ENCODE measurements at regions of chr7 and their contacts with region 1.

Region 1: DNA sequence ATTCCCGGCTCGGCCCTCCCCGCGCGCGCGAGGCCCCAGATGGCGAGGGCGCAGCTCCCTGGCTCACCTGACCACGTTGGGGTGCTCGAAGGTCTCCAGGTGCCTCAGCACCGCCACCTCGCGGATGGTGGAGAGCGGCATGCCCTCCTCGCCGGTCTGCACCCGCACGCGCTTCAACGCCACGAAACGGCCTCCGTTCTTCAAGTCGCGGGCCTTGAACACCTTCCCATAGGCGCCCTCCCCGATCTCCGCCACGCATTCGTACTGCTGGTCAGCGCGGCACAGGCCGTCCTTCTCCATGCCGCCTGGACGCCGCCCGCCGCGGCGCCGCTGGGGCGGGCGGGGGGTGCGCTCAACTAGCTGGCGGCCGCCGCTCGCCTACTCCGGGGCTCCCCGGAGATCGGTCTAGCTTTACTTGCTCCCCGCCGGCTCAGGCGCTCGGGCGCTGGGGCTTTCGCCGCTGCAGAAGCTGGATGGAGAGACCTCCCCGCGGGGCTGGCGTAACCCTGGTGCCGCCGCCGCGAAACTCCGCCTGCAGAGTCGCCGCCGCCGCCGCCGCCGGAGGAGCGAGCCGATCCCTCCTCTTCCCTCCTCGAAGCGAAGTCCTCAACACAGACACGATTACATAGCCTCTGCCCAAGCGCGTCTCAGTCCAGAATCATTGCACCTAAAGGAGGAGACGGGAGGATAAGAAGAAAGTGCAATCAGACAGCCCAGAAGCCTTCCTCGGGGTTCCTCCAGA is 3.2 kb downstream of the CDK6 start:
- DNase-seq: peak; percentile 97
- H3K4me3 Mint-ChIP-seq: peak overlapping the region; percentile 99
- H3K27ac Mint-ChIP-seq: peak overlapping the region; percentile 100
- H3K4me1 Mint-ChIP-seq: peaks cover 40% of the 10 kb centered on the region
- H3K27me3 Mint-ChIP-seq: peaks cover 6% of the 10 kb centered on the region

Region 2: GRCh38 chr7:92528188-92528957 is 304.8 kb before region 1 on chr7 and contains the starts of genes PEX1 and RBM48:
- intact Hi-C with region 1: loop called (anchors 1 kb)
- DNase-seq: peak; percentile 98
- H3K4me3 Mint-ChIP-seq: peak within 1 kb of the TSS; percentile 98
- H3K27ac Mint-ChIP-seq: peak within 1 kb of the TSS; percentile 98
- H3K4me1 Mint-ChIP-seq: peaks cover 22% of the 10 kb centered on the region
- H3K27me3 Mint-ChIP-seq: peaks cover 2% of the 10 kb centered on the region
- total RNA-seq, gene PEX1: 14.4 and 14.8 TPM in 2 replicates
- total RNA-seq, gene RBM48: 14.4 and 17.3 TPM in 2 replicates

Region 3: DNA sequence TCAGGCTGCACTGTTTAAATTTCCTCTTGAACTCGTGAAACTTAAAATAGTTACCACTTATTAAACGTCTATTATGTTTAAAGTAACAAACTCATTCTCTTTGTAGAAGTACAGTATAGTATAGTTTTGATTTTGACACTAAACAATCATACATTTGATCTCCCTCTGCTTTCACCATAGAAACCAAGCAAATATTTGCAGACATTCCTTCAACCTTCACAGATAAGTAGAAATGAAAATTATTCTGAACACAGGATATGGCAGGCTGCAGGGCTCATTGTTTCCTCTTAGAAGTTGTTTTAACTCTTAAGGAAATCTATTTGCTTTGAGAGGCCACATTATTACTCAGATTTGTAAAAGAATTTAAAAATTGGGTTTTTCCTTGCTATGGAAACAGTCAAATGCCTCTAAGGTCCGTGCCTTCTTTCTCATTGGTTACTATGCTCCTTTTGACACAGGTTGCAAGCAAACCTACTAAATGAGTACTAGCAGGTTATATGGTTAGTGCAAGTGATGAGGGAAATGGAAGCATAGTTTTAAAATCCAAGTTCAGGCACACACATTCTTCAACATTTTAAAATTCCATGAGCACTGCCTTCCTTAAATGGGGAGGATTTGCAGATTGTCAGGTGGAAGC is 150.2 kb before region 1 on chr7:
- intact Hi-C with region 1: loop called (anchors 1 kb)
- DNase-seq: peak; percentile 75
- H3K4me3 Mint-ChIP-seq: peak overlapping the region; percentile 47
- H3K27ac Mint-ChIP-seq: peak overlapping the region; percentile 96
- H3K4me1 Mint-ChIP-seq: peaks cover 79% of the 10 kb centered on the region
- H3K27me3 Mint-ChIP-seq: no peaks in the 10 kb centered on the region

Region 4: DNA sequence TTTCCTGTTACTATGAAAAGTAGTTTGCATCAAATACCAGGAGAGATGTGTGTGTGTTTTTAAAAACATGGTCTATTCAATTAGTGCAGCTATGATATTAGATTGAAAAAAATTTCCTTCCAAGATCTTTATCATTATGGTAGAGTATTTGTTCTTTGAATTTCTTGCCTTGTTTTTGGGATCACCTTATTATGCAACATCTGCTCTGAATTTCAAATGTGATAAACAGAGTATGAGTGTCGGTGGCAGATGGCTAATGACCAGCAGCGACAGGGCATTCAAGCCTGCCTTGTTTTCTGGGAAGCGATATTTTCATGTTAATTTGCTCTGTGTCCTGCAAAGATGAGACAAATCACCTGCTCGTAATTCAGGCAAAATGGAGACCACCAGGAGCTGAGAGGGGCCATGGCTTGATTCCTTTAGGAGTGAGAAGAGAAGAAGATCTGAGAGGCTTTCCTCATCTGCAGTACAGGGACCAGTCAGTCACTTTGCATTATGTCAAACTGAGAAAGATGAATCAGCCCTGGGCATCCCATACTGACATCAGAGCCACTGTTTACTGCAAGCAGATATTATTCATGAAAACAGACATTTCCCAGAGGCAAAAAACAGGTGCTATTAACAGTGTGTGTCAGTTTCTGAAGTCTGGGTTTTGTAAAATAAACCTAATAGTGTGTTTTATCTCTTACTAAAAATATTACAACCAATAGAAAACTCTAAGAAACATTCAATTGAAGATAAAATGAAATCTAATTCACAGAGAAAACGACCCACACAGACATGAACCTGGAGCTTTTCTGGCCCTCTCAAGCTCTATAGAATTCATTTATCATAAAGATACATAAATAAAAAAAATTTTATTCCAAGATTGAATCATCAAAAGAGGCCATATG is 64.4 kb before region 1 on chr7:
- intact Hi-C with region 1: loop called (anchors 2 kb)
- DNase-seq: peak; percentile 66
- H3K4me3 Mint-ChIP-seq: peak overlapping the region; percentile 63
- H3K27ac Mint-ChIP-seq: peak overlapping the region; percentile 94
- H3K4me1 Mint-ChIP-seq: peaks cover 59% of the 10 kb centered on the region
- H3K27me3 Mint-ChIP-seq: no peaks in the 10 kb centered on the region

Region 5: GRCh38 chr7:92854501-92855238 is 21.5 kb after region 1 on chr7:
- intact Hi-C with region 1: loop called (anchors 2 kb)
- DNase-seq: peak; percentile 68
- H3K4me3 Mint-ChIP-seq: peak overlapping the region; percentile 51
- H3K27ac Mint-ChIP-seq: peak overlapping the region; percentile 85
- H3K4me1 Mint-ChIP-seq: peaks cover 16% of the 10 kb centered on the region
- H3K27me3 Mint-ChIP-seq: no peaks in the 10 kb centered on the region

Region 6: DNA sequence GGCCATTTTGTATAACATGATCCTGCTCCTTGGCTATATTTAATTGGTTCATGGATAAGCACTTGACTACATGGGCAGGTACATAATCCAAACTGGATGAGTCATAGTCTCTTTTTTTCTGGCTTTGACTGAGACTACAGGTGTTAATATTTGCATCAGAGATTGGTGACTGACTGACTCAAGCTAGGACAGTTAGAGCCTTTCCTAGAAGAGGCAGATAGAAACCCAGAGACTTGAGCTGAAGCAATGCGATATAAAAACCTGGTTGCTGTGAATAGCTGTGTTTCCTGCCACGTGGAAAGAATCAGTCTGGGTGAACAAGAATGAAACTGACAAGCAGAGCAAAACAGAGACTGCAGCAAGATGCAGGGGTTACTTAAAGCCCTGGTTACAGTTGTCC is 203.6 kb after region 1 on chr7:
- intact Hi-C with region 1: loop called (anchors 1 kb)
- DNase-seq: peak; percentile 83
- H3K4me3 Mint-ChIP-seq: no peak overlapping the region
- H3K27ac Mint-ChIP-seq: peak overlapping the region; percentile 74
- H3K4me1 Mint-ChIP-seq: peaks cover 26% of the 10 kb centered on the region
- H3K27me3 Mint-ChIP-seq: no peaks in the 10 kb centered on the region

Region 7: DNA sequence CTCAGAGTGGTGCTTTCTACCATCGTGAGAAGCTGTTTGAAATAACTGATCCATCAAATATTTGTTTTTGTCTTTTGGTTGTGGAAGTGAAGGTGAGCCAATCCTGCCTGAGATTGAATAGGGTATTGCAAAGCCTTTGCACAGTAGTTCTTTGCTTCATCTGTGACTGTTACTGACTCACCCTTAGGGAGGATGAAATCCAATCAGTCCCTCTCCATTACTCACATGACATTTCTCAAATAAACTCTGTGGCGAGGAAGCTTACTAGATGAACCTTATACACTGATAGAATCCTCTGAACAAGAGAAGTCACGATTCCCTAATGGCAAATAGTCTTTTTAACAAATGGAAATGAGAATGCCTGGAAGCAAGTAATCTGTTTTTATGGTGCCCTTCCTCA is 361.2 kb after region 1 on chr7:
- intact Hi-C with region 1: no loop called
- DNase-seq: no peak
- H3K4me3 Mint-ChIP-seq: no peak overlapping the region
- H3K27ac Mint-ChIP-seq: no peak overlapping the region
- H3K4me1 Mint-ChIP-seq: no peaks in the 10 kb centered on the region
- H3K27me3 Mint-ChIP-seq: peaks cover 40% of the 10 kb centered on the region

Region 8: DNA sequence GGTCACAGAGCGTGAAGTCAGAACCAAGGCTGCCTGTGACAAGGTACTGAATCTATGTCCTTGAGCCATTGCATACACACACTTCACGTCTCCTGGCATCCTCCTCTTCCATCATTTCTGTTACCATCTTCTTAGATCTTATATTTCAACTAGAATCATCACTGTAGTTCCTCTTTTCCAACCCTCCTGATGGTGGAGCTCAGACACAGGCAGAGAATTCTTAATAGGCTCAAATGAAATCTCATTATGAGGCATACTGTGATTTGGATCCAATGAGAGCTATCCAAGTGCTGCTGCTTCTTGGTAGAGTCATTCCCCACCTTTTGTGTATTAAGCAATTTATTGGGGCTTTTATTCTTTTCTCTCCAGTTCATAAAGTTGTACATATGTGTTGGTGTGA is 628.2 kb after region 1 on chr7:
- intact Hi-C with region 1: no loop called
- DNase-seq: no peak
- H3K4me3 Mint-ChIP-seq: no peak overlapping the region
- H3K27ac Mint-ChIP-seq: no peak overlapping the region
- H3K4me1 Mint-ChIP-seq: no peaks in the 10 kb centered on the region
- H3K27me3 Mint-ChIP-seq: peaks cover 2% of the 10 kb centered on the region

Measured in activated CD4-positive, alpha-beta T cell treated with anti-CD3 and anti-CD28 coated beads, Interleukin-2, amount 10 ng/mL, durations not matched to agents 24 days and 14 days (primary cell).